CD4-positive, alpha-beta memory T cell (primary cell): ENCODE measurements at regions of chr3 and their contacts with region 1.

Region 1: DNA sequence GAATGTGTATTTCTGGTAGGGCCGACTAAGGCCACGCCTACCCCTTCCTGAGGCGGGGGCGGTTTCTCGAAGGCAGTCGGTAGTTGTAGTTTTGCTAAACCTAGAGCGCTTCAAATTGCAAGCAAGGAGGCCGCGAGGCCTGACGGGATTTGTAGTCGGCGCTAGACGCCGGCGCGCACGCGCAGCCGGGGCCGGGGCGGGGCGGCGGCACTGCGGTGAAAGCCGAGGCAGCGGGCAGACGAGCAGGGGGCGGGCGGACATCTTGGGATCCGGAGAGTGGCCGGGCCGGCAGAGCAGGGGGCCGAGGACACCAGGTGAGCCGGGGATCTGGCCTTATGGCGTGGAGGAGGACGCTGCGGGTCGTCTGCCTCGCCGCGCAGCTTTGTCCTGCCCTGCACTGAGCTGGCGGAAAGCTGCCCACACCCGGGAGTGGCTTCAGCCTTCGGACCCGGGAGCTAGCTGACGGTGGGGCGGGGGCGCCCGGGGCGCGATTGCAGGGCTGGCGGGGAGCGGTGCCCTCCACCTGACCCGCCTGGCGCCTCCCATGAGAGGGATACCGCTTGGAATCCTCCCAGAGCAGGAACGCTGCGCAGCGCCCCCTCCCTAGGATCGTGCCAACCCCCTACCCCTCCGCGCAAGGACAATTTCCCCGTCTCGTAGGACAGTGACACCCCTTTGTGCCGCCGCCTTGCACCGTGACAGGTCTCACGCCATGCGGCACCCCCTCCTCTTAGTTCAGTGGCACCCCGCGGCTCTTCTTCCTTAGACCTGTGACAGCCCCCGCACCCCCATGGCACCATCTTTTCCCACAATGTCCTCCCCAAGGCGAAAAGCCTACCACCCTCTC is at the start of gene AP2M1:
- DNase-seq: peak; percentile 98 to 99 (median 99)
- H3K4me3 ChIP-seq: peak within 1 kb of the TSS; percentile 68 to 90
- H3K4me3 Mint-ChIP-seq: peak within 1 kb of the TSS; percentile 90 to 98 (median 96)
- H3K27ac ChIP-seq: peak within 1 kb of the TSS; percentile 88
- H3K27ac Mint-ChIP-seq: peak within 1 kb of the TSS; percentile 88 to 95 (median 92)
- H3K4me1 ChIP-seq: peaks cover 37% of the 10 kb centered on the region
- H3K4me1 Mint-ChIP-seq: peaks cover 17 to 43% (median 30%) of the 10 kb centered on the region in 4 donors
- H3K27me3 ChIP-seq: no peaks in the 10 kb centered on the region
- H3K27me3 Mint-ChIP-seq: no peaks in the 10 kb centered on the region
- total RNA-seq, gene AP2M1: 206 to 208 TPM

Region 2: DNA sequence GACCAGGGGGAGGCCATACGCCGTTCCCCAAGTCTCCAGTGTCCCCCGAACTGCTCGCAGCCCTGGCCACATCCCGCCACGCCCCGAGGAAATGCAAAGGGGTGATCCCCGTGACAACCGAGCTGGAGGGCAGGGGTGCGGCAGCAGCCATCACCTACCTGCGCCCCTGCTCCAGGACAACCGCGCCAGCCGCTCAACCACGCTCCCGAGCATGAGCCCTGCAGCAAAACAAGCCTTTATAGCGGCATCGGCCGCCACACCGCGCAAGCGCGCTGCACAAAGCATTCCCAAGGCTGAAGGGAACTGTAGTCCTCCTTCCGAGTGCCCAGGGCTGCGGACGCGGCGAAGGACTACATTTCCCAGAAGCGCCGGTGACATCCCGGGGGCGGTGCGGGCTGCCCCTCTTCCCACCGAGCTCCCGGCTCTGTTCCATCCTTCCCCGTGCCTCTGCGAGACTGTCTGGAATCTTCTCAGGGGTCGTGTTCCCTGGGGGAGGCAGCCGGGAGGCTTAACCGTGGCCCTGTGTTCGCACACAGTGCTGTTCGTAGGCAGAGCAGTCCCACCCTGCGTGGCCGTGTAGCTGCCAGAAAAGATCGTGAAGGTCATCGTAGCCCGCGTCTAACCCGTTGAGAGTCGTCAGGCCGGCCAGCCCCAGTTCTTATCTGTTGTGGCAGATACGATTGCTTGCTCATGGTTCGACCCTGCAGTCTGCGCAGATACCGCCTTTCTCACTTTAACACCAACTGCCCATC is 157.0 kb before region 1 on chr3 and contains the start of gene ABCC5:
- CTCF ChIA-PET with region 1: interaction called, 4 read pairs
- POLR2A ChIA-PET with region 1: no interaction called
- intact Hi-C with region 1: loop called (anchors 1 kb)
- DNase-seq: peak; percentile 79 to 84 (median 82)
- H3K4me3 ChIP-seq: peak within 1 kb of the TSS; percentile 93 to 96
- H3K4me3 Mint-ChIP-seq: peak within 1 kb of the TSS; percentile 98 to 100 (median 100)
- H3K27ac ChIP-seq: peak within 1 kb of the TSS; percentile 43
- H3K27ac Mint-ChIP-seq: peak within 1 kb of the TSS; percentile 90 to 96 (median 93)
- H3K4me1 ChIP-seq: peaks cover 17% of the 10 kb centered on the region
- H3K4me1 Mint-ChIP-seq: peaks cover 16 to 35% (median 24%) of the 10 kb centered on the region in 4 donors
- H3K27me3 ChIP-seq: no peaks in the 10 kb centered on the region
- H3K27me3 Mint-ChIP-seq: peaks cover 6 to 8% of the 10 kb centered on the region in 2 donors
- total RNA-seq, gene ABCC5: 42.3 to 42.6 TPM

Region 3: DNA sequence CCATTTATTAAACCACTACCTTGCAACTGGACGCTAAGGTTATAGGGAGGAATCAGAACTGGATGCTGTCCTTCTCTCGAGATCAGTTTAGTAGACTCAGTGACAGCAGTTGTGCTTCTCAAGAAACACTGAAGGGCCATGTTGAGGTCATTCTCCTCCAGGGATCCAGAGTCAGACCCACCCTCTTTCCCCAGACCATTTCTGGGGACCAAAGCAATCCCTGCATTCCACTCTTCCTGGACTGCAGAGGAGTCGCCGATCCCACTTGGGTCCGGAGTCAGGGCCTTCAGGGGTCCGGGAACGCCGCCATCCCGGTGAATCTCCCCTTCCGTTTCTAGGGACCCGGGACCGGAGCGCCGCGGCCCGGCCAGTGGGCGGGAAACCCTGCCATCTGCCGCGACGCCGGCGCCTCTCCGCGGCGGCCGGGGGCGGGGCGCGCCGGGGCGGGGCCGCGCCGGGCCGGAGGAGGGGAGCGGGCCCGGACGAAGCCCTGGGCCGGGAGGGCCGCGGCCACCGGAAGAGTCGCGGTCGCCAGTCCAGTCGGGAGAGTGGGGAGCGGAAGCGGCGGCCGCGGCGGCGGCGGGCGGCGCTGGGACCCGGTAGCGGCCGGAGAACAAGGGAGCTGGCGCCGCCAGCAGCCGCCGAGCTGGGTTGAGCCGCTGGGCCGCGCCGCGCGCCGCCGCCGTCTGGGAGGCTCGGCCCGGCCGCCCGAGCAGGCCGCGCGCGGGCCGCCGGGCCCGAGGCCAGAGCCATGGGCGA is 19.8 kb before region 1 on chr3 and contains the start of gene DVL3:
- CTCF ChIA-PET with region 1: interaction called, 3 read pairs
- POLR2A ChIA-PET with region 1: interaction called, 5 read pairs
- intact Hi-C with region 1: loop called (anchors 1 kb)
- DNase-seq: peak in 4 of 5 donors; percentile 38 to 56 (median 44)
- H3K4me3 ChIP-seq: peak within 1 kb of the TSS; percentile 56 to 81
- H3K4me3 Mint-ChIP-seq: peak within 1 kb of the TSS; percentile 91 to 97 (median 95)
- H3K27ac ChIP-seq: peak within 1 kb of the TSS; percentile 59
- H3K27ac Mint-ChIP-seq: peak within 1 kb of the TSS; percentile 22 to 95 (median 93)
- H3K4me1 ChIP-seq: peaks cover 32% of the 10 kb centered on the region
- H3K4me1 Mint-ChIP-seq: peaks cover 20 to 34% (median 28%) of the 10 kb centered on the region in 4 donors
- H3K27me3 ChIP-seq: no peaks in the 10 kb centered on the region
- H3K27me3 Mint-ChIP-seq: no peaks in the 10 kb centered on the region
- total RNA-seq, gene DVL3: 43.3 to 46.4 TPM

Region 4: DNA sequence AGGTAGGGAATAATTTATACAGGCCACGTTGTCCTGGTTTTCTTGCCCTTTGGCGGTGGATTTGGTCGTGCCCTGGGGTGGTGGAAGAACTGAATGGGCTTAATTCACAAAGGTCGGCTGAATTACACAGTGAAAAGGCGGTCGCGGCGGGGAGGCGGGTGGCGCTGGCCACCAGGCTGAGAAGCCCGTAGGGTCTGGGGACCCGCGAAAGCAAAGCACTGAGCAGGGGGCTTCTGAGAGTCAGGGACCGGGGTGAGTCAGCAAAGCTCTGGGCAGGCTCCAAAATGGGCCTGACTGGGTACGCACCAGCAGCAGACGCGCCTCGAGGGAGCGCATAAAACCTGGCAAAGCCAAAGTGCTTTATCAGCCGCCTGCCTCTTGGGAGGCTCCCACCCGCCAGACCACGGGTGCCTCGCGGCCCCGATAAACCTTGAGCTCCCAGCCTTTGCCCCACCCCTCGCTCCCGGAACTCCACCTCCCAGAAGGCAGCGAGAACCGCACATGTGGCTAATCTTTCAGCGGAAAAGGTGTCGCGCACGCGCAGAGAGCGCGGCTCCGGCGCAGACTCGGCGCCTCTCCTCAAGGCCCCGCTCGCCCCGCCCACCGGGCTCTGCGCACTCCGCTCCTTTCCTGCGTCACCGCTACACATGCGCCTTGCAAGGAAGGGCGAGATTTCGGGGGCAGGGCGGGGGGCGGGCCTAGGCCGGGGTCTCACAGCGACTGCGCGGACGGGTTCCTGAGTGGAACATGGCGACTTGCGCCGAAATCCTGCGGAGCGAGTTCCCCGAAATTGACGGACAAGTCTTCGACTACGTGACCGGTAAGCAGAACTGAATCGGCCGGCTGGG is 10.8 kb after region 1 on chr3 and contains the start of gene ABCF3:
- CTCF ChIA-PET with region 1: interaction called, 3 read pairs
- POLR2A ChIA-PET with region 1: interaction called, 26 read pairs
- intact Hi-C with region 1: loop called (anchors 1 kb)
- DNase-seq: peak; percentile 98 to 100 (median 99)
- H3K4me3 ChIP-seq: peak within 1 kb of the TSS; percentile 87 to 98
- H3K4me3 Mint-ChIP-seq: peak within 1 kb of the TSS; percentile 98 to 99 (median 98)
- H3K27ac ChIP-seq: peak within 1 kb of the TSS; percentile 80
- H3K27ac Mint-ChIP-seq: peak within 1 kb of the TSS; percentile 92 to 99 (median 97)
- H3K4me1 ChIP-seq: peaks cover 30% of the 10 kb centered on the region
- H3K4me1 Mint-ChIP-seq: peaks cover 26 to 47% (median 36%) of the 10 kb centered on the region in 4 donors
- H3K27me3 ChIP-seq: no peaks in the 10 kb centered on the region
- H3K27me3 Mint-ChIP-seq: no peaks in the 10 kb centered on the region
- total RNA-seq, gene ABCF3: 122 to 124 TPM

Region 5: DNA sequence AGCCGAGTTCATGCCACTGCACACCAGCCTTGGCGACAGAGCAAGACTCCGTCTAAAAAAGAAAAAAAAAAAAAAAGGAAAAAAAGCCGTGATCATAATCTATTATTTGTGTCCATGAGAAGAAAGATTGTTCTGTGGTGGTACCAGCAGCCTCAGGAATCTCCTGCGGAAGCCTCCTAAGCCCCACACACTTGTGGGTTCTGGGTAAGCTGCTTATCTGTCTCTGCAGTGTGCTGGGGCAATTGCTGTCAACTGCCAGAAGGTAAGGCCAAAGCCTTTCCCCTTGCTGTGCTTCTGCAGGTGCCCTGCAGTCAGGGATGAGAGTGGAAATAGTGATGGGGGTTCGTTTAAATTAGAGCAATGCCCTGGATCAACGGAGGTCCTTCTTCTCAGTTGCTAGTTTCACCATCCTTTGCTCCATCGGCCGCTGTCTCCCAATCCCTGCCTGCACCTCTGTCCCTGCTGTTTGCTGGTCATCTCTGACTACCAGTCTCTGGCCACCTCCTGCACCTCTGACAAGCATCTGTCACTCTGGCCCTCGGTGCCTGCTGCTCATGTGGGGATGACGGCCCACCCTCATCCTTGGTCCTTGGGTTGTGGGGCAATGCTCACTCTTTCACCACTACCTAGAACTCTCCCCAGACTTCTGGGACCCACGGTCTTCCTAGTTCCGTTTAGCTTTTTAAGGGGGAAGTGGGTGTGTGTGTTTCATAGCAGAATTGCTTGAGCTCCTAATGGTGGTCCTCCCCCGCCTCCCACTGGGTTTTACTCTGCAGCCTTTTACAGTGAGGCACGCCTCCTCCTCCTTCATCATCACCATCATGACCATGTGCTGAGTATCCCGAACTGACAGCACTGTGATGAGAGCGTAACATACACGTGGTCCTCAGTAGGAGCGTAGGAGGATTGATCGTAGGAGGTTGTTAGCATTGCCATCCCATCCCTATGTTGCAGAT is 230.5 kb after region 1 on chr3:
- CTCF ChIA-PET with region 1: no interaction called
- POLR2A ChIA-PET with region 1: no interaction called
- intact Hi-C with region 1: no loop called
- DNase-seq: no peak
- H3K4me3 ChIP-seq: no peak overlapping the region
- H3K4me3 Mint-ChIP-seq: no peak overlapping the region
- H3K27ac ChIP-seq: no peak overlapping the region
- H3K27ac Mint-ChIP-seq: no peak overlapping the region
- H3K4me1 ChIP-seq: no peaks in the 10 kb centered on the region
- H3K4me1 Mint-ChIP-seq: peaks cover 0 to 4% (median 0%) of the 10 kb centered on the region in 4 donors
- H3K27me3 ChIP-seq: no peaks in the 10 kb centered on the region
- H3K27me3 Mint-ChIP-seq: peaks cover 16 to 17% of the 10 kb centered on the region in 2 donors

Region 6: DNA sequence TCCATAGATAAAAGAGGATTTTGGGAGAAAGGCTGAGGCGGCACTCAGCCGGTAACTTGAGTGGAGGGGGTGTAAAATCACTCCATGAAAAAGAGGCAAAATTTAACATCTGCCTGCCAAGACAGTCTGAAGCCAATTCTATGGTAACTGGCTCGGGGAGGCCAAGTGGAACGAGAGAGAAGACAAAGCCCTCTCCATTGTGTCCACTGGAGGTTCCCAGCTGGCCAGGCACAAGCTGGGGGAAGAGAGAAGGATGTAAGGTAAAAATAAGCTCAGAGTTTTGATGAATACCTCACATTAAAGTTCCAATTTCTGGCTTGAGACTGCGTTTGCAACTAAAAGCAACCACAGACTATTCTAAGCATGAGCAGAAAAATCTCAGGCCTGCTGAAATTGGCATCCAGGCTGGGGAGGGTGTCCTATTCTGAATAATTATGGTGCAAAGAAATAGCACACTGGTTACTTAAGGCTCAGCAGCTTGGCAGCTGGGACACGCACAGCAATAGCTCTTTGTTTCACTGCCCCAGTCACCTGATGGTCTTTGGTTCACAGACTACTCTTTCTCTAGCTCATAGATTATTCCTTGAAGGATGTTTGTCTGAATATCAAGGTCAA is 253.8 kb after region 1 on chr3:
- CTCF ChIA-PET with region 1: no interaction called
- POLR2A ChIA-PET with region 1: no interaction called
- intact Hi-C with region 1: no loop called
- DNase-seq: no peak
- H3K4me3 ChIP-seq: no peak overlapping the region
- H3K4me3 Mint-ChIP-seq: no peak overlapping the region
- H3K27ac ChIP-seq: no peak overlapping the region
- H3K27ac Mint-ChIP-seq: no peak overlapping the region
- H3K4me1 ChIP-seq: no peaks in the 10 kb centered on the region
- H3K4me1 Mint-ChIP-seq: no peaks in the 10 kb centered on the region
- H3K27me3 ChIP-seq: no peaks in the 10 kb centered on the region
- H3K27me3 Mint-ChIP-seq: peaks cover 6 to 11% of the 10 kb centered on the region in 2 donors